K562 (cell line): ENCODE measurements at regions of chr5 and their contacts with region 1.

Region 1: DNA sequence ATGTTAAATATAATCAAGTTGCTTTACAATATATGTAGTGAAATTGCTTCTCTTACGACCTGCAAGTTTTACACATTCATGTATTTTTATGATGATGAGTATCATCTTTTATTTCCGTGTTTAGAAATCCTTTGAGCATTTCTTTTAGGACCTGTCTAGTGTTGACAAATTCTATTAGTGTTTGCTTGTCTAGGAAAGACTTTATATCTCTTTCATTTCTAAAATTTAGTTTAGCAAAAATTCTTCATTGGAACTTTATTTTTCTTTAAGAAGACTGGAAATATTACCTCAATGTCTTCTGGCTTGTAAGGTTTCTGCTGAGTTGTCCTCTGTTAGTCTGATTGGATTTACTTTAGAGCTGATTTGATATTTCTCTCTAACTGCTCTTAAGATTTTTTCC is 920.9 kb upstream of the CTNND2 start:
- DNase-seq: no peak
- ATAC-seq: no peak
- H3K4me3 ChIP-seq: no peak overlapping the region
- H3K27ac ChIP-seq: no peak overlapping the region
- H3K4me1 ChIP-seq: no peaks in the 10 kb centered on the region
- H3K27me3 ChIP-seq: no peaks in the 10 kb centered on the region
- CTCF ChIP-seq: no peak
- EP300 ChIP-seq: no peak
- POLR2A ChIP-seq: no peak
- RAD21 ChIP-seq: no peak

Region 2: GRCh38 chr5:12805165-12805707 is 19.9 kb before region 1 on chr5:
- CTCF ChIA-PET with region 1: no interaction called
- POLR2A ChIA-PET with region 1: no interaction called
- in situ Hi-C with region 1: no loop called
- intact Hi-C with region 1: loop called (anchors 1 kb)
- DNase-seq: peak in 1 of 4 experiments; percentile 5
- ATAC-seq: no peak
- H3K4me3 ChIP-seq: no peak overlapping the region
- H3K27ac ChIP-seq: no peak overlapping the region
- H3K4me1 ChIP-seq: no peaks in the 10 kb centered on the region
- H3K27me3 ChIP-seq: no peaks in the 10 kb centered on the region
- CTCF ChIP-seq: no peak
- EP300 ChIP-seq: no peak
- POLR2A ChIP-seq: no peak
- RAD21 ChIP-seq: no peak